MCF 10A (cell line): ENCODE measurements at regions of chr10 and their contacts with region 1.

Region 1: GRCh38 chr10:122419876-122420623 is 34.4 kb upstream of the ARMS2 start:
- DNase-seq: peak; percentile 81
- H3K4me3 Mint-ChIP-seq: peak overlapping the region; percentile 52
- H3K27ac Mint-ChIP-seq: peak overlapping the region; percentile 91
- H3K4me1 Mint-ChIP-seq: peaks cover 44% of the 10 kb centered on the region
- H3K27me3 Mint-ChIP-seq: no peaks in the 10 kb centered on the region
- CTCF ChIP-seq: no peak

Region 2: DNA sequence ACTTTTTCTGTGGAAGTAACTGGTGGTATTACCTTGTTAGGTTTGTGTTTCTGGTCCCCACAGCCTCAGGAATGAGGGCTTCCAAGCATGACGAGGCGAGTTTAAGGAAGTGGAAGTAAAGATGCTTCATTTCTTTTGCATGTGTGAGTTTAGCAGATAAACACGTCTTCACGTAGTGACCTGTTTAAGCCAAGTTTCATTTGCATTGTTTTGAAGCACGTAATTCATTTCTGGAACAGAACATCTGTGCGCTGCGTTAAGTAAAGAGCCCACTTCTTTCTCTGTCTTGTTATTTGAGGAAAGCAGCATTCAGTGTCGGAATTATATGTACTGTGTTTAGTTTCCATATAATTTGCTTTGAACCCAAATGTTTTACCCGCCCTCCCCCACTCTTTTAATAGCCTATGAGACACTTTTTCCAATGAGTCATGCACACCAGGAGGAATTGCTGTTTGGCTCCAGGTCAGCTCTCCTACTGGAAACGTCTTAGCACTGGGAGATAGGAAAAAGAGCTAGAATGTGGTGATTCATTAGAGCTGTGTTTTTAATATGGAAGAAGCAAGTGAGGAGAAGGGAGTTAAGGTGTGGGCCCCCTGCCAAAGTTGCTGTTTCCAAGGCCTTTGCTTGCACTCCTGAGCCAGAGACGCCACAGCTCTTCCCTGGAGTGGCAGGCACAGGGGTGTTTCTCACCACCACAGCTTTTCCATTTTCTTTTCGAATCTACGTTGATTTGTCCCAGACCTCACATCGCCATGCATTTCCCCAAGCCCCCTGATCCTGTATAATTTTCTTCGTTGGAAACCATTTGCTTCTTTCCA is 112.2 kb before region 1 on chr10:
- CTCF ChIA-PET with region 1: no interaction called
- POLR2A ChIA-PET with region 1: interaction called, 15 read pairs
- intact Hi-C with region 1: no loop called
- DNase-seq: peak; percentile 98
- H3K4me3 Mint-ChIP-seq: peak overlapping the region; percentile 64
- H3K27ac Mint-ChIP-seq: peak overlapping the region; percentile 94
- H3K4me1 Mint-ChIP-seq: peaks cover 22% of the 10 kb centered on the region
- H3K27me3 Mint-ChIP-seq: no peaks in the 10 kb centered on the region
- CTCF ChIP-seq: no peak

Region 3: GRCh38 chr10:122323941-122324675 is 95.9 kb before region 1 on chr10:
- CTCF ChIA-PET with region 1: no interaction called
- POLR2A ChIA-PET with region 1: interaction called, 10 read pairs
- intact Hi-C with region 1: no loop called
- DNase-seq: peak; percentile 91
- H3K4me3 Mint-ChIP-seq: no peak overlapping the region
- H3K27ac Mint-ChIP-seq: peak overlapping the region; percentile 90
- H3K4me1 Mint-ChIP-seq: peaks cover 14% of the 10 kb centered on the region
- H3K27me3 Mint-ChIP-seq: no peaks in the 10 kb centered on the region
- CTCF ChIP-seq: no peak